ENCODE measurements at regions of chr16 and their contacts with region 1.

Region 1: GRCh38 chr16:85821441-85822135 is 22.1 kb downstream of the COX4I1 start:
- DNase-seq: peak; percentile 85
- ATAC-seq: peak; percentile 91 to 96 (median 93)
- H3K4me3 ChIP-seq: no peak overlapping the region
- H3K4me3 Mint-ChIP-seq: no peak overlapping the region
- H3K27ac ChIP-seq: no peak overlapping the region
- H3K27ac Mint-ChIP-seq: no peak overlapping the region
- H3K4me1 ChIP-seq: peaks cover 23% of the 10 kb centered on the region
- H3K4me1 Mint-ChIP-seq: peaks cover 0 to 15% of the 10 kb centered on the region in 2 donors
- H3K27me3 ChIP-seq: no peaks in the 10 kb centered on the region
- H3K27me3 Mint-ChIP-seq: peaks cover 0 to 7% of the 10 kb centered on the region in 2 donors
- CTCF ChIP-seq: peak; percentile 99

Region 2: DNA sequence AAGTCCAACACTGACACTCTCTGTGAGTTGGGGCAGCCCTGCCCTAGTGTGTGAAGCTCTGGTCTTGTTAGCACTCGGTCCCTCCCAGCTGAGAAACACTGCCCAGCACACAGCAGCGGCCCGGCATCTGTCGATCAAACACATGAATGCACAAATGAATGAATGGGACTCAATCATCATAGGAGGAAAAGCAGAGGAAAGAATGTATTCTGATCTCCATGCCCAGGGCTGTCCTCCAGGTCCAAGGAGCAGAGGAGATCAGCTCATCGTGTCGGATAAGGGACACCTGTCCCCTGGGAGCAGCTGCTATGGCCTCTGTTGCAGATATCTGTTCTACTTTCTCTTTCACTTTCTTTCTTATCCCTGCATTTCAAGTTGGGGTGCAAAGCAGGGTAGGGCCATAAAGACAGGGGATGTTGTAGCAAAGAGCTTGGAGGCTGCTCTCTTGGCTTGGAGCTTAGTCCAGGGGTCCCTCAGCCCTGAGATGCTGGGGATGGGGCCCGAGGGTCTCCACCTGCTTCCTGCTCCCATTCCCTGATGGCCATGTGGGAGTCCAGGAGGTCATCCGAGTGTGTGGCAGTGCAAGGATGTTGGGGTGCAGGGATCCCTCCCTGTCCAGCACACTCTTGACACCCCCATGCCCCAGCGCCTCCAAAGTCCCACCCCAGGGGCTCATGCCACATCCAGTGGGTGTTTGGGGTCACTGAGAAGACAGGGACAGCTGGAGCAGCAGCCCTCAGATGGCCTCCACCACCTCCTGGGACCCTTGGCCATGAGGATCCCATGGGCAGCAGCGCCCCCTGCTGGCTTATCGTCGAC is 165.6 kb after region 1 on chr16:
- intact Hi-C with region 1: loop called (anchors 1 kb)
- DNase-seq: peak; percentile 47 to 64
- ATAC-seq: peak in 2 of 3 donors; percentile 34 to 46
- H3K4me3 ChIP-seq: no peak overlapping the region
- H3K4me3 Mint-ChIP-seq: peak overlapping the region; percentile 61
- H3K27ac ChIP-seq: peak overlapping the region; percentile 10
- H3K27ac Mint-ChIP-seq: peak overlapping the region; percentile 91 to 95
- H3K4me1 ChIP-seq: peaks cover 72% of the 10 kb centered on the region
- H3K4me1 Mint-ChIP-seq: peaks cover 31 to 54% of the 10 kb centered on the region in 2 donors
- H3K27me3 ChIP-seq: no peaks in the 10 kb centered on the region
- H3K27me3 Mint-ChIP-seq: no peaks in the 10 kb centered on the region
- CTCF ChIP-seq: peak; percentile 57

Region 3: DNA sequence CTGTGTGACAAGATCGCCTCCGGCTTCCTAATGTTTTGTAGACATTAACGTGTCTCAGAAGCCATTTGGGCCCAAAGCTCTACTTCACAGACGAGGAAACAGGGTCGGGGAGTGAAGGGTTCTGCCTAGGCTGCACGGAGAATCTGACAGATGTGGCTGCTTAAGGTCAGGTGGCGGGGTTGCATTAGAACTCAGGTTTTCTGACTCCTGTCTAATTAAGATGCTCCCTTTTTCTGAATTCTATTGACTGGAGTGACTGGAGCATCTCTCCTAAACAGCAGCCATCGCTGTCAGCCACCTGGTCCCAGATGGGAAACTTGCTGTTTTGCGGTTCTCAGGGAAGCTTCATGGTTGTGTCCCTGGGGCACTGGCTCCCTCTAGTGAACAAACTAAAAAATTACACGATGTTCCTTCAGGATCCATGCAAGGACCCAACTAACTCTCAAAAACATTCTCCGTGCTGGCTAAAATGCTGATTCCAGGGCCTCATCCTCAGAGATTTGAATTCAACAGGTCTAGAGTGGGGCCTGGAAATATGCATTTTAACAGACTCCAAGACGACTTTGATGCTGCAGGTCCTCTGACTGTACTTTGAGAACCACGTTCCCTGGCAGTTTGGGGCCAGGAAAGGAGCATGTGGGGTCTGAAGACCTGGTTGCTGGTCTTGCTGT is 194.7 kb after region 1 on chr16:
- intact Hi-C with region 1: loop called (anchors 1 kb)
- DNase-seq: peak in 1 of 2 donors; percentile 75
- ATAC-seq: peak; percentile 45 to 71 (median 56)
- H3K4me3 ChIP-seq: no peak overlapping the region
- H3K4me3 Mint-ChIP-seq: no peak overlapping the region
- H3K27ac ChIP-seq: no peak overlapping the region
- H3K27ac Mint-ChIP-seq: no peak overlapping the region
- H3K4me1 ChIP-seq: peaks cover 26% of the 10 kb centered on the region
- H3K4me1 Mint-ChIP-seq: peaks cover 0 to 6% of the 10 kb centered on the region in 2 donors
- H3K27me3 ChIP-seq: peaks cover 2% of the 10 kb centered on the region
- H3K27me3 Mint-ChIP-seq: peaks cover 19 to 22% of the 10 kb centered on the region in 2 donors
- CTCF ChIP-seq: peak; percentile 78

Region 4: DNA sequence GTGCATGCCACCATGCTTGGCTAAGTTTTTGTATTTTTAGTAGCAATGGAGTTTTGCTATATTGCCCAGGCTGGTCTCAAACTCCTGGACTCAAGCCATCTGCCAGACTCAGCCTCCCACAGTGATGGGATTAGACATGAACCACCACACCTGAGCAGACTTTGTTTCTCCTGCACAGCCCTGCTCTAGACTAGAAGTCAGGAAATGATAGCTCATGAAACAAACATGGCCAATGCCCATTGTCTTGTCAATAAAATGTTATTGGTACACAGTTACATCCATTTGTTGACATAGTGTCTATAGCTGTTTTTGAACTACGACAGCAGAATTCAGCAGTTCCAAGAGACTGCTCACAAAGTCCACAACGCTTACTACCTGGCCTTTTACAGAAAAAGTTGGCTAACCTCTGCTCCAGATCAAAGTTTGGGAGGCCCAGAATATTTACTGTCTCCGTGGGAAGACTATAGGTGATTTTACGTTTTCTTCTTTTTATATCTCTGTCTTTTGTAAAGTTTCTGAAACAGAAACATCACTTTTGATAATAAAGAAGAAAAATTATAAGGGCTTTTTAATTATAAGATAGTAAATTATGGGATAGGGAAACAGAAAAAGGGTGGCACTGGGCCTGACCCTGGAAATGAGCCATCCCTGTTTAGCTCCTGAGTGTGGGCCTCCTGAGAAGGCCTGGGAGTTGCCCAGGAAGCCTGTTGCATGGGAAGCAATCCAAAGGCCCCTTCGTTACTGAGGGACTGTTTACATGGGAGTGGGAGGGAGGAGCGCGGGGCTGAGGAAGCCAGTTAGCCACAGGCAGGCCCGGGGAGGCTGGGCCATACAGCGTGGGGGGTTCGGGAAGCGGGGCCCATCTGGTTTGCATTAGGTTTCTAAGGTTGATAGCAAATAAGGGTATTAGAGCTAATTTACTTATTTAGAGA is 278.9 kb after region 1 on chr16:
- intact Hi-C with region 1: no loop called
- DNase-seq: no peak
- ATAC-seq: no peak
- H3K4me3 ChIP-seq: no peak overlapping the region
- H3K4me3 Mint-ChIP-seq: no peak overlapping the region
- H3K27ac ChIP-seq: no peak overlapping the region
- H3K27ac Mint-ChIP-seq: no peak overlapping the region
- H3K4me1 ChIP-seq: no peaks in the 10 kb centered on the region
- H3K4me1 Mint-ChIP-seq: no peaks in the 10 kb centered on the region
- H3K27me3 ChIP-seq: no peaks in the 10 kb centered on the region
- H3K27me3 Mint-ChIP-seq: peaks cover 5 to 16% of the 10 kb centered on the region in 2 donors
- CTCF ChIP-seq: no peak

Region 5: DNA sequence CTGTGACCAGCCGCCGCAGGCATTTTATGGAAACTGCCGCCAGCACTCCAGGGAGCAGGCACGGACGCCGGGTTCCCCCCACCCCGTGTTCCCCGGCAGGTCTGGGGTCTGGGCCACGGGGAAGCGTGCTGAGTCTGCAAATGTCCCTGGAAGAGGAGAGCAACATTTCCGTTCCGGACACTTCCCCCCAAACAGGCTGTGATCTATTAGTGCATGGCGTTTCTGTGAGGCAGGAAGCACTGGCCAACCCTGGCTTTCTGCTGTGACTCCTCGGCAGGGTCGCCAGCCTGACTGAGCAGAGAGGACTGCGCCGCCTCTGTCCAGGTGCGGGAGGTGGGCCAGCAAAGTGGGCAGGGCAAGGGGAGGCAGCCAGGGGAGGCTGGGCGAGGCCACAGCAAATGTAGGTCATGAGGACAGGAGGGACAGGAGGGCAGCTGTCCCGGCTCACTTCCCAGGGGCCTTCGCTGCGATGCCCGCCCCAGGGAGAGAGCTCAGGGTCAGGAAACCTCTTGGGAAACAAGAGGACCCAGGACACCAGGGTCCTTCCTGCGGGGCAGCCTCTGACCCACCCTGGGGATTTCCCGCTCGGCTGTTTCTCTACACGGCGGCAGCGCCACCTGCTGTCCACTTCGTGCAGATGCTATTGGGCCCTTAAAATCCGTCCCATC is 698.2 kb after region 1 on chr16:
- intact Hi-C with region 1: loop called (anchors 1 kb)
- DNase-seq: peak; percentile 51 to 80
- ATAC-seq: peak; percentile 77 to 91 (median 84)
- H3K4me3 ChIP-seq: no peak overlapping the region
- H3K4me3 Mint-ChIP-seq: no peak overlapping the region
- H3K27ac ChIP-seq: no peak overlapping the region
- H3K27ac Mint-ChIP-seq: peak overlapping the region in 1 of 2 donors; percentile 47
- H3K4me1 ChIP-seq: peaks cover 11% of the 10 kb centered on the region
- H3K4me1 Mint-ChIP-seq: peaks cover 0 to 8% of the 10 kb centered on the region in 2 donors
- H3K27me3 ChIP-seq: peaks cover 32% of the 10 kb centered on the region
- H3K27me3 Mint-ChIP-seq: peaks cover 40 to 55% of the 10 kb centered on the region in 2 donors
- CTCF ChIP-seq: peak; percentile 92

Measured in natural killer cell (primary cell).